ENCODE measurements at regions of chr4 and their contacts with region 1.

Region 1: GRCh38 chr4:54971474-54971950 is 153.9 kb downstream of the KDR start:
- DNase-seq: peak; percentile 53
- ATAC-seq: peak; percentile 95
- H3K4me3 ChIP-seq: no peak overlapping the region; a peak in 1 of 4 replicates
- H3K27ac ChIP-seq: no peak overlapping the region
- H3K4me1 ChIP-seq: no peaks in the 10 kb centered on the region
- H3K27me3 ChIP-seq: no peaks in the 10 kb centered on the region
- CTCF ChIP-seq: peak; percentile 68 to 98 (median 86)
- POLR2A ChIP-seq: no peak
- RAD21 ChIP-seq: peak; percentile 85

Region 2: DNA sequence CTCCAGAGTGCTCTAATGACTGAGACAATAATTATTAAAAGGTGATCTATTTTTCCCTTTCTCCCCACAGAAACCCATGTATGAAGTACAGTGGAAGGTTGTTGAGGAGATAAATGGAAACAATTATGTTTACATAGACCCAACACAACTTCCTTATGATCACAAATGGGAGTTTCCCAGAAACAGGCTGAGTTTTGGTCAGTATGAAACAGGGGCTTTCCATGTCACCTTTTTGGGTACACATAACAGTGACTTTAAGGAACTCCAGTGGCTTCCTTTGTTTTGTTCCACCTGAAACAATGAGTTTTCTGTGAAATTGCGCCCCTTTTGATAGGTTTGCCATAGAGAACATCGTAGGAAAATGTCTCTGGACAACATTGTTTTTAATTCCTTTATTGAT is 244.2 kb before region 1 on chr4:
- CTCF ChIA-PET with region 1: no interaction called
- POLR2A ChIA-PET with region 1: no interaction called
- RAD21 ChIA-PET with region 1: no interaction called
- intact Hi-C with region 1: no loop called
- DNase-seq: no peak
- ATAC-seq: no peak
- H3K4me3 ChIP-seq: no peak overlapping the region
- H3K27ac ChIP-seq: no peak overlapping the region
- H3K4me1 ChIP-seq: no peaks in the 10 kb centered on the region
- H3K27me3 ChIP-seq: peaks cover 28% of the 10 kb centered on the region; the same call in 1 of the 2 replicates
- CTCF ChIP-seq: no peak
- POLR2A ChIP-seq: no peak
- RAD21 ChIP-seq: no peak

Region 3: DNA sequence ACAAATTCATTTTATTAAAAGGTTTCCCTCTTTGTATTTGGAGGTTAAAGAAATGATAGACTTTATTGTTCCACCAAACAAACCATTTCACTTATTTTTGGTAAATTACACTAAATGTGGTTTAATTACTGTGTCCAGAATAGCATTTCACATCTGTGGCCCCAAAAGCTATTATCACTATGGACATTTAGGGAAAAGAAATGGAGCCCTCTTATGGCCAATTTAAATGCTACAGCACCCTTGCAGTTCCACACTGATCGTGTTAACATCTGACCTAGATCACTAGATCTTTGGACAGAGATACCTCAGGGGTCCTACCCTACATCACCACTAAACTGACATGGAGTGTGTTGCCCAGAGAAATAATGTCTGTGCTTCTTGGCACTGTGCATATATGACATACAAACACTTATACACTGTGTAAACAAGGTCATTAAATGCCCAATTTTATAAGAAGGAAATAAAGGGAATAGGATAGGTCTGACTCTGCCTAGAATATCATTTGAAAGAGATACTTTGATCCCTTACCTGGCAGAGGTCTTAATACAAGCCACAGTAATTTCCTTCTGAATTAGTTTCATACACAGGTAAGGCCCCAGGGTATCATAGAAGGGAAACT is 10.0 kb before region 1 on chr4:
- CTCF ChIA-PET with region 1: interaction called, 11 read pairs
- POLR2A ChIA-PET with region 1: no interaction called
- RAD21 ChIA-PET with region 1: no interaction called
- intact Hi-C with region 1: no loop called
- DNase-seq: peak; percentile 21
- ATAC-seq: peak; percentile 89
- H3K4me3 ChIP-seq: no peak overlapping the region
- H3K27ac ChIP-seq: no peak overlapping the region
- H3K4me1 ChIP-seq: no peaks in the 10 kb centered on the region
- H3K27me3 ChIP-seq: no peaks in the 10 kb centered on the region
- CTCF ChIP-seq: peak; percentile 46 to 70 (median 59); a peak in 5 of 6 replicates
- POLR2A ChIP-seq: no peak
- RAD21 ChIP-seq: peak; percentile 70

Region 4: GRCh38 chr4:55175779-55176231 is 204.3 kb after region 1 on chr4:
- CTCF ChIA-PET with region 1: no interaction called
- POLR2A ChIA-PET with region 1: interaction called, 3 read pairs
- RAD21 ChIA-PET with region 1: no interaction called
- intact Hi-C with region 1: loop called (anchors 5 kb)
- DNase-seq: peak; percentile 60
- ATAC-seq: peak; percentile 89
- H3K4me3 ChIP-seq: peak overlapping the region; percentile 66 to 89
- H3K27ac ChIP-seq: peak overlapping the region; percentile 73
- H3K4me1 ChIP-seq: peaks cover 11 to 42% of the 10 kb centered on the region in 2 experiments
- H3K27me3 ChIP-seq: no peaks in the 10 kb centered on the region
- CTCF ChIP-seq: 0 out of 6 replicates have a peak, but pooled peaks of 1 of the 3 experiments have one; percentile 12
- POLR2A ChIP-seq: peak; percentile 82
- RAD21 ChIP-seq: no peak

Region 5: GRCh38 chr4:55321707-55322264 is 350.3 kb after region 1 on chr4:
- CTCF ChIA-PET with region 1: interaction called, 53 read pairs
- POLR2A ChIA-PET with region 1: no interaction called
- RAD21 ChIA-PET with region 1: no interaction called
- intact Hi-C with region 1: loop called (anchors 1 kb)
- DNase-seq: peak; percentile 88
- ATAC-seq: peak; percentile 99
- H3K4me3 ChIP-seq: no peak overlapping the region
- H3K27ac ChIP-seq: no peak overlapping the region
- H3K4me1 ChIP-seq: peaks cover 0 to 10% of the 10 kb centered on the region in 2 experiments; a peak in 1 of 4 replicates
- H3K27me3 ChIP-seq: no peaks in the 10 kb centered on the region
- CTCF ChIP-seq: peak; percentile 60 to 96 (median 68)
- POLR2A ChIP-seq: no peak
- RAD21 ChIP-seq: peak; percentile 93

Region 6: DNA sequence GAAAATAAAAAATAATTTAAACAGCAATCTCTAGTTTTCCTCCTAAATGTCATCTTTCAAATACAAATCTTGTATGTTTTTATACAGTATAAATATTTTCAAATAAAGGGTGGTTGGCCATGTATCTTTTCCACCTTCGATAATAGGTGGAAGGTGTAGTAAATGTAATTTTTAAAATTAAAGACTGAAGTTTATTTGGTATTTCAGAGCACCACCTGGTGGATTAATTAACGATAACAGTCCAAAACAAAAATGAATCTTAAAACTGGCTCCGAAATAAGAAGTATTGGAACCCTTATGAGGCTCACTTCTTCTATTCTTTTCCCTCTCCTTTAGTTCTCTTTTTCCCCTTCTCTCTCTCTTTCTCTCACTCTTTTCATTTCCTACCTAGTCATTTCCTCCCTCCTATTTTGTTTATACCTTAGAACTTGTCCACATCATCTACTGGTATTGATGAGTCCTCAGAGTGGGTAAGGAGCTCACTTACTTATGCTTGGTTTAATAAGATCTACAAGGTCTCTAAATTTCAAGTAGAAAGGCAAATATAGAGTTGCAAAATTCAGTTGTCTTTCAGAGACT is 765.2 kb after region 1 on chr4:
- CTCF ChIA-PET with region 1: no interaction called
- POLR2A ChIA-PET with region 1: no interaction called
- RAD21 ChIA-PET with region 1: no interaction called
- intact Hi-C with region 1: loop called (anchors 1 kb)
- DNase-seq: peak; percentile 23
- ATAC-seq: no peak
- H3K4me3 ChIP-seq: no peak overlapping the region
- H3K27ac ChIP-seq: no peak overlapping the region
- H3K4me1 ChIP-seq: peaks cover 5 to 18% of the 10 kb centered on the region in 2 experiments
- H3K27me3 ChIP-seq: no peaks in the 10 kb centered on the region
- CTCF ChIP-seq: peak; percentile 23 to 58 (median 54); a peak in 4 of 6 replicates
- POLR2A ChIP-seq: no peak
- RAD21 ChIP-seq: peak; percentile 79

Measured in HCT116 (cell line).